Activated CD4-positive, alpha-beta T cell treated with anti-CD3 and anti-CD28 coated beads, Interleukin-2, amount 10 ng/mL, durations not matched to agents 24 days and 14 days (primary cell): ENCODE measurements at regions of chr22 and their contacts with region 1.

Region 1: DNA sequence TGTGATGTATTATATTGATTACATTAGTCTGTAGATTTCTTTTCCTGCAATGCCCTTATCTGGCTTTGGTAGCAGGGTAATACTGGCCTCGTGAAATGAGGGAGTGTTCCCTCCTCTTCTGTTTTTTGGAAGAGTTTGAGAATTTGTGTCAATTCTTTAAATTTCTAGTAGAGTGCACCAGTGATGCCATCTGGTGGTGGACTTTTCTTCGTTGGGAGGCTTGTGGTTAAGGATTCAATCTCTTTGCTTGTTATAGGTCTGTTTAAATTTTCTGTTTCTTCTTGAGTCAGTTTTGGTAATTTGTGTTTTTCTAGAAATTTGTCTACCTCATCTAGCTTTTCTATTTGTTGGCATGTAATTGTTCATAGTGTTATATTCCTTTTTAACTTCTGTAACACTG is 18.9 kb downstream of the SHANK3 start:
- DNase-seq: peak; percentile 84
- H3K4me3 Mint-ChIP-seq: no peak overlapping the region
- H3K27ac Mint-ChIP-seq: no peak overlapping the region
- H3K4me1 Mint-ChIP-seq: peaks cover 8% of the 10 kb centered on the region
- H3K27me3 Mint-ChIP-seq: peaks cover 19% of the 10 kb centered on the region

Region 2: GRCh38 chr22:50250555-50251476 is 440.7 kb before region 1 on chr22 and contains the start of gene HDAC10:
- intact Hi-C with region 1: loop called (anchors 5 kb)
- DNase-seq: peak; percentile 96
- H3K4me3 Mint-ChIP-seq: peak within 1 kb of the TSS; percentile 84
- H3K27ac Mint-ChIP-seq: peak within 1 kb of the TSS; percentile 80
- H3K4me1 Mint-ChIP-seq: peaks cover 3% of the 10 kb centered on the region
- H3K27me3 Mint-ChIP-seq: no peaks in the 10 kb centered on the region
- total RNA-seq, gene HDAC10: 62.2 and 64.6 TPM in 2 replicates

Region 3: GRCh38 chr22:50537765-50538164 is 153.8 kb before region 1 on chr22:
- intact Hi-C with region 1: loop called (anchors 5 kb)
- DNase-seq: no peak
- H3K4me3 Mint-ChIP-seq: peak overlapping the region; percentile 55
- H3K27ac Mint-ChIP-seq: peak overlapping the region; percentile 99
- H3K4me1 Mint-ChIP-seq: peaks cover 75% of the 10 kb centered on the region
- H3K27me3 Mint-ChIP-seq: no peaks in the 10 kb centered on the region

Region 4: DNA sequence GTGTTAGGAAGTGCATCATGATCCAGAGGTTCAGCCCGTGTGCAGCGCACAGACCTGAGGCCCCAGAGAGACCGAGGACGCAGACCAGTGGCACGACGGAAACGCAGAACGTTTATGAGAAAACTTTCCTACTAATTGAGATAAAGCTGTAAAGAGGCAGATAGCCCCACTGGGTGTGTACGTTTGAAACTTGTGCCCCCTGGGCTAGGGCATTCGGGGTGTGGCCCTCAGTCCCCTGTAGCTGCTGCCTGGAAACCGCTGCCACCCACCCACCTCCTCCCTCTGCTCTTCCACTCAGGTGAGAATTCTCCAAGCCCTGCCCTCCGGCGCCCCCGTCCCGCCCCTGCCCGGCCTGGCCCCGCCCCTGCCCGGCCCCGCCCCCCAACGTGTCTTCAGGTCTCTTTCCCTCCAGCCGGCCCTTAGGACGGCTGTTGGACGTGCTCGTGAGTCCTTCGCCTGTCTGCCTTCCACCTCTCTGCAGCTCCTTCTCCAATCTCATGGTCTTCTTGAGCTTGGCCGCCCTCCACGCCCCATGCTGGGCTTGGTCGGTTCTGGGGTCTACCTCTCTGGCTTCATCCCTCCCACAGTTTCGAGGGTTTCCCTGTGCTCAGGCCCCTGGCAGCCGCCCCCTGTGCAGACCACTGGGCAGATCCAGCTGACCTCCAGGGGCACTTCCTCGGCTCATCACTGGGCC is 78.8 kb before region 1 on chr22:
- intact Hi-C with region 1: no loop called
- DNase-seq: no peak
- H3K4me3 Mint-ChIP-seq: no peak overlapping the region
- H3K27ac Mint-ChIP-seq: no peak overlapping the region
- H3K4me1 Mint-ChIP-seq: peaks cover 11% of the 10 kb centered on the region
- H3K27me3 Mint-ChIP-seq: peaks cover 17% of the 10 kb centered on the region

Region 5: GRCh38 chr22:50627642-50628542 is 63.6 kb before region 1 on chr22 and contains the start of gene ARSA:
- intact Hi-C with region 1: loop called (anchors 5 kb)
- DNase-seq: peak; percentile 94
- H3K4me3 Mint-ChIP-seq: peak within 1 kb of the TSS; percentile 94
- H3K27ac Mint-ChIP-seq: peak within 1 kb of the TSS; percentile 75
- H3K4me1 Mint-ChIP-seq: peaks cover 16% of the 10 kb centered on the region
- H3K27me3 Mint-ChIP-seq: no peaks in the 10 kb centered on the region
- total RNA-seq, gene ARSA: 20.6 and 22.1 TPM in 2 replicates

Region 6: DNA sequence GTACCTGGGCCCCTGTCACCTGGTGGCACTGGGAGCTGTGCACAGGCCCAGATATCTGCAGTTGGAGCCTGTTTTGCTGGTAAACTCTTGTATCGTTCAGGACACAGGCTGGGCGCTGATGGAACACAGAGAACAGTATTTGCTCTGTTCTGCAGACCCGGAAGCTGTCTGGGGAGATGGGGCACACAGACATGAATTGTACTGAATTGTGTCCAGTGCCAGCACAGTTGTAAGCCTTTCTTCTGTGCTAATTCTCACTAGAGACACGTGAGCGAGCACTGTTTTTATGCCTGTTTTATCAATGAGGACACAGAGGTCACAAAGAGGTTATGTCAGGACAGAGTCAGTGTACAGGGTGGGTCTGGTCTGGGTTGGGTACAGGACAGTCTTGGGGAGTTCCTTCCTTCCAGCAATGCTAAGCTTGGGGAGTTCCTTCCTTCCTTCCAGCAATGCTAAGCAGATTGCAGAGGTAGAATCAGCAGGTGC is 22.1 kb after region 1 on chr22:
- intact Hi-C with region 1: no loop called
- DNase-seq: no peak
- H3K4me3 Mint-ChIP-seq: no peak overlapping the region
- H3K27ac Mint-ChIP-seq: no peak overlapping the region
- H3K4me1 Mint-ChIP-seq: no peaks in the 10 kb centered on the region
- H3K27me3 Mint-ChIP-seq: peaks cover 2% of the 10 kb centered on the region